Adrenal gland (tissue), 19 donors: ENCODE measurements at regions of chr17 and their contacts with region 1.

Region 1: GRCh38 chr17:80132906-80133625 is 13.9 kb downstream of the EIF4A3 start:
- DNase-seq: no peak
- H3K4me3 ChIP-seq: no peak overlapping the region
- H3K27ac ChIP-seq: no peak overlapping the region
- H3K4me1 ChIP-seq: no peaks in the 10 kb centered on the region
- H3K27me3 ChIP-seq: no peaks in the 10 kb centered on the region
- CTCF ChIP-seq: no peak
- POLR2A ChIP-seq: no peak

Region 2: GRCh38 chr17:79892459-79892858 is 240.6 kb before region 1 on chr17:
- intact Hi-C with region 1: no loop called
- DNase-seq: no peak
- H3K4me3 ChIP-seq: no peak overlapping the region
- H3K27ac ChIP-seq: no peak overlapping the region
- H3K4me1 ChIP-seq: peaks cover 0 to 3% of the 10 kb centered on the region in 2 donors
- H3K27me3 ChIP-seq: peaks cover 9% of the 10 kb centered on the region
- CTCF ChIP-seq: no peak
- POLR2A ChIP-seq: no peak

Region 3: DNA sequence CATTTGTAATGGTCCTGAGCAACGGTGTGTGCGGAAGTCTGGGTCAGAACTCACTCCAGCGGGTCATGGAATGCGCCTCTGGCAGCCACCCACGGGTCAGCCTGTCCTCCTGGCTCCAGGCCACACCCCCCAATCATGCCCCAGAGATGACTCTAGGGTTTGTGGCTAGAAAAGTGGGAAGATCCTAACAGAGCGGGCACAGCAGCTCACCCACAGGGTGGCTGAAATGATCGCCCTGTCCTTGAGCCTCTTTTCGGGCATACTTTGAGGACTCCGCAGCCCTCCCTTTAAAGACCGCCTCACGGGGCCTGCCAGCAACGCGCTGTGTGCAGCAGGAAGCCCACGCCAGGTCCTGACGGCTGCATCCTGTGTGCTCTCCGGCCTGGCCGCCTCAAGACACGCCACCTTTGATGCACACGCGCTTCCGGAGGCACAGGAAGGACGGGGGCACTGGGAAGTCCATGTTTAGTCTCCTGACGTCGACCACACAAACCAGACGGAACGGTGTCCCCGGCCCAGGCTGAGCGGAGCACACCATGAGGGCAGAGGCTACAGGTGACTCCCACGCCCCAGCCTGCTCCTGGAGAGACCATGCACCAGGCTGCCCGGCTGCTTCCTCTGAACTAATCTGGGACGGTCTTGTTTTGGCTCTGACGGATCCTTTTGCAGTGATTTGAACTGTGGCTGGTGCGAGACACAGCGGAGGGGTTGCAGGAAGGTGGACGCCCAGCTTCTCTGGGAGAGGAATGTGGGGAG is 190.3 kb before region 1 on chr17:
- intact Hi-C with region 1: no loop called
- DNase-seq: peak in 4 of 7 donors; percentile 15 to 54 (median 42)
- H3K4me3 ChIP-seq: no peak overlapping the region
- H3K27ac ChIP-seq: peak overlapping the region in 1 of 5 donors; percentile 64
- H3K4me1 ChIP-seq: no peaks in the 10 kb centered on the region
- H3K27me3 ChIP-seq: no peaks in the 10 kb centered on the region
- CTCF ChIP-seq: no peak
- POLR2A ChIP-seq: no peak

Region 4: DNA sequence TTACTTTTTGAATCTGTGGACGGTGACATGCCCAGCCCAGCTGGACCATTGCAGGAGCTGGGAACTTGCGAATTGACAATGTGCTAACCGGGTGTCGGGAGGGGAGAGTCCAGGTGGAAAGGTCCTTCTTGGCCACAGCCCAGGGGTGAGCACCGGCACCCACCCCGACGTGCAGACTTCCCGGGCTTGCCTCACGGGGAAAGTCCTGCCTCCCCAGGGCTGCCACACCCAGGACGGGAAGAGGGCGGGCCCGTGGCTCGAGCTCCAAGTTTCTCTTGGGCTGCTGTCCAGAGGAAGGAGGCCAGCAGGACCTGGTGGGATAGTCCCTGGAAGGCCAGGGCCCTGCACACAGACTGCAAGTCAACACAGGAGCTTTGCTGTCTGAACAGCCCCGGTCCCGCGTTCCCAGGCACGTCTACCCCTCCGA is 54.5 kb after region 1 on chr17:
- intact Hi-C with region 1: no loop called
- DNase-seq: peak; percentile 73 to 92 (median 90)
- H3K4me3 ChIP-seq: peak overlapping the region in 2 of 4 donors; percentile 5 to 50
- H3K27ac ChIP-seq: peak overlapping the region; percentile 69 to 96 (median 78)
- H3K4me1 ChIP-seq: peaks cover 4 to 11% of the 10 kb centered on the region in 2 donors
- H3K27me3 ChIP-seq: no peaks in the 10 kb centered on the region
- CTCF ChIP-seq: no peak
- POLR2A ChIP-seq: no peak

Region 5: GRCh38 chr17:80389011-80389995 is 256.2 kb after region 1 on chr17:
- intact Hi-C with region 1: loop called in 1 of 2 experiments (anchors 10 kb)
- DNase-seq: no peak
- H3K4me3 ChIP-seq: no peak overlapping the region
- H3K27ac ChIP-seq: peak overlapping the region in 1 of 5 donors; percentile 17
- H3K4me1 ChIP-seq: peaks cover 4 to 11% of the 10 kb centered on the region in 2 donors
- H3K27me3 ChIP-seq: no peaks in the 10 kb centered on the region
- CTCF ChIP-seq: no peak
- POLR2A ChIP-seq: no peak

Region 6: DNA sequence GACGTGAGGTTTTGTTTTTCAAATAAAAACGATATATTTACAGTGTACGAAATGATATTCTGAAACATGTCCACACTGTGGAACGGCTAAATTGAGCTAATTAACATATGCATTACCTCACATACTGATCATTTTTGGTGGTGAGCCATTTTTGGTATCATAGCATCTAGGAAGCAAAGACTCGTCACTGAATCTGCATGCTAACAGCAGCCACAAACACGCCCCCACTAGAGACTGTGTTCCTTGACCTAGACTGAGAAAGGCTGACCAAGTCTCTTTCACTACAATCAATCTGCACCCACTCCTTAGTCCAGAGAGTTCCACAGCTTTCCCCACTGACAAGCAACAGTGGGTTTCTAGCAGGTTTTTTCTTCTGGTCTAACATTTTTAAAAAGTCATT is 1474.4 kb after region 1 on chr17:
- intact Hi-C with region 1: no loop called
- DNase-seq: no peak
- H3K4me3 ChIP-seq: no peak overlapping the region
- H3K27ac ChIP-seq: no peak overlapping the region
- H3K4me1 ChIP-seq: peaks cover 3 to 16% of the 10 kb centered on the region in 2 donors
- H3K27me3 ChIP-seq: no peaks in the 10 kb centered on the region
- CTCF ChIP-seq: no peak
- POLR2A ChIP-seq: no peak